ENCODE measurements at regions of chrX and their contacts with region 1.

Region 1: DNA sequence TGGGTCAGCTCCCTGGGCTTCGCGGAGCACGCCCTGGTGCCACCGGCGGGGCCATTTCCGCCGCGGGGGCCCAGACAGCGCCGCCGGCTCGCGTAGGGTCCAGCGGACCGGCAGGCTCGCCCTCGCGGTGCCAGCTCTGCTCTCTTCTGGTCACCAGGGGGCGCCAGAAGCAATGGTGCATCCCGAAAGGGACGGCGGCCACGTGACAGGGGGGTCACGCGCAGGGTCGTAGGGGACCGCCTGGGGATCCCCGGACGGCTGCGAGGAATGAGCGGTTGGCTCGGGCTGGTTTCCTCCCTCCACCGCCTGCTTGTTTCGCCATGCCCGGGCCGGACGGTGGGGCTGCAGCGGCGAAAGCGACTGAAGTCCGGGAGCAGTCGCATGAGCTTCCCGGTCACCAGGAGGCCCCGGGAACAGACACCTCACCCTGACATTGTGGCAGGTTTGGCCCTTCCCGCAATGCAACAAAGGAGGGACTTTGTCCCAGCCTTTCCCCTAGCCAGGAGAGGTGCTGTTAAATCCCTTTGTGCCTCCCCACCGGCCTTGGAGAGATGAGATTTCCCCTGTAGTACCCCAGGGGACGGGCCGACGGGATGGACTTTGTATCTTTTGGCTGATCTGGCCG is 15.8 kb downstream of the ZCCHC12 start:
- DNase-seq: peak; percentile 85 to 92
- ATAC-seq: peak; percentile 94 to 98 (median 96)
- H3K4me3 ChIP-seq: peak overlapping the region; percentile 72
- H3K27ac ChIP-seq: peak overlapping the region; percentile 41
- H3K4me1 ChIP-seq: no peaks in the 10 kb centered on the region
- H3K27me3 ChIP-seq: no peaks in the 10 kb centered on the region
- CTCF ChIP-seq: peak; percentile 70

Region 2: GRCh38 chrX:118468122-118468521 is 371.3 kb before region 1 on chrX:
- intact Hi-C with region 1: no loop called
- DNase-seq: no peak
- ATAC-seq: no peak
- H3K4me3 ChIP-seq: no peak overlapping the region
- H3K27ac ChIP-seq: no peak overlapping the region
- H3K4me1 ChIP-seq: no peaks in the 10 kb centered on the region
- H3K27me3 ChIP-seq: no peaks in the 10 kb centered on the region
- CTCF ChIP-seq: no peak

Region 3: GRCh38 chrX:119067023-119067739 is 227.7 kb after region 1 on chrX:
- intact Hi-C with region 1: loop called in 1 of 2 experiments (anchors 2 kb)
- DNase-seq: peak; percentile 49 to 60
- ATAC-seq: peak; percentile 68 to 85 (median 74)
- H3K4me3 ChIP-seq: no peak overlapping the region
- H3K27ac ChIP-seq: no peak overlapping the region
- H3K4me1 ChIP-seq: no peaks in the 10 kb centered on the region
- H3K27me3 ChIP-seq: no peaks in the 10 kb centered on the region
- CTCF ChIP-seq: peak; percentile 70